Mammary epithelial cell (primary cell): ENCODE measurements at regions of chr5 and their contacts with region 1.

Region 1: GRCh38 chr5:10452768-10453331 is 11.2 kb downstream of the ROPN1L start:
- DNase-seq: peak; percentile 64
- H3K4me3 ChIP-seq: no peak overlapping the region
- H3K27ac ChIP-seq: no peak overlapping the region
- H3K4me1 ChIP-seq: peaks cover 43% of the 10 kb centered on the region
- H3K27me3 ChIP-seq: no peaks in the 10 kb centered on the region
- CTCF ChIP-seq: peak; percentile 79 to 88

Region 2: GRCh38 chr5:9813305-9813704 is 639.5 kb before region 1 on chr5:
- CTCF ChIA-PET with region 1: no interaction called
- dilution Hi-C with region 1: no loop called
- in situ Hi-C with region 1: no loop called
- intact Hi-C with region 1: no loop called
- DNase-seq: no peak
- H3K4me3 ChIP-seq: no peak overlapping the region
- H3K27ac ChIP-seq: no peak overlapping the region
- H3K4me1 ChIP-seq: no peaks in the 10 kb centered on the region
- H3K27me3 ChIP-seq: no peaks in the 10 kb centered on the region
- CTCF ChIP-seq: no peak

Region 3: GRCh38 chr5:10214041-10214440 is 238.8 kb before region 1 on chr5:
- CTCF ChIA-PET with region 1: no interaction called
- dilution Hi-C with region 1: no loop called
- in situ Hi-C with region 1: no loop called
- intact Hi-C with region 1: no loop called
- DNase-seq: no peak
- H3K4me3 ChIP-seq: no peak overlapping the region
- H3K27ac ChIP-seq: no peak overlapping the region
- H3K4me1 ChIP-seq: no peaks in the 10 kb centered on the region
- H3K27me3 ChIP-seq: no peaks in the 10 kb centered on the region
- CTCF ChIP-seq: no peak

Region 4: DNA sequence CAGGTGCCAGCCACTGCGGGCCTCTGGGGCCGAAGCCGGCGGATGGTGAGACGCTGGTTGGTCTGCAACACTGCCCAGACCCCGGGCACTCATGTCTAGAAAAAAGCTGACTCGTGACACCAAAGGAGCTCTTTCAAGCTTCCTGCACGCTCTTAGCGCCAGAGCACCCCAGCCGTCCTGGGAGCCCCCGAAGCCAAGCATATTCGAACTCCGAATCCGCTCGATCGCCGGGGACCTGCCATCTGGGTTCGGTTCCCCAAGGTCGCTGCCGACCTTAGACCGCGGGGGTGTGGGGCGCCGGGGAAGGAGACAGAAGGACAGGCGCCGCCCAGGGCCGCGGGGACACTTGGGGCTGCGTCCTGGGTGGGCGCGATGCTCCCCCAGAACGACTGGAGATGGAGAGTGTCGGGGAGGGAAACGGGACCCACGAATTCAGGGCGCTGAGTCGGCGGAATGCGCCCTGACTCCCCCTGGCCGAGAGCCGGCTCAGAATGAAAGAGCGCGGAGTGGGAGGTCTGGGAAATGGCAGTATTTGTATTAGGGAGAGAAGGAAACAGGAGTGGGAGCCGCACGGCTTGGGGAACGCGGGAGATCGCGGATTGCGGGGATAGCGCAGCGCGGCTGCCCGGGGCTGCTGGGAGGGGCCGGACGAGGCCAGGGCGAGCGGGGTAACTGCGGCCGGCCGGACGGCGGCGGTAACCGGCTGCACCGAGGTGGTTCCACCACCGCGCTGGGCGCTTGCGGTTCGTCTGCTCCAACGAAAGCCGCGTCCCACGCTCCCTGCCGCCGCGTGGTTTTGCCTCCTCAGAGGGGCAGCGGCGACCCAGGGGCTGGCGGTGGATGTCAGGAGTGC is 119.5 kb before region 1 on chr5:
- CTCF ChIA-PET with region 1: no interaction called
- dilution Hi-C with region 1: no loop called
- in situ Hi-C with region 1: no loop called
- intact Hi-C with region 1: no loop called
- DNase-seq: no peak
- H3K4me3 ChIP-seq: peak overlapping the region; percentile 47 to 62 (median 61)
- H3K27ac ChIP-seq: no peak overlapping the region
- H3K4me1 ChIP-seq: peaks cover 25% of the 10 kb centered on the region
- H3K27me3 ChIP-seq: no peaks in the 10 kb centered on the region
- CTCF ChIP-seq: peak in 1 of 2 donors; percentile 20

Region 5: DNA sequence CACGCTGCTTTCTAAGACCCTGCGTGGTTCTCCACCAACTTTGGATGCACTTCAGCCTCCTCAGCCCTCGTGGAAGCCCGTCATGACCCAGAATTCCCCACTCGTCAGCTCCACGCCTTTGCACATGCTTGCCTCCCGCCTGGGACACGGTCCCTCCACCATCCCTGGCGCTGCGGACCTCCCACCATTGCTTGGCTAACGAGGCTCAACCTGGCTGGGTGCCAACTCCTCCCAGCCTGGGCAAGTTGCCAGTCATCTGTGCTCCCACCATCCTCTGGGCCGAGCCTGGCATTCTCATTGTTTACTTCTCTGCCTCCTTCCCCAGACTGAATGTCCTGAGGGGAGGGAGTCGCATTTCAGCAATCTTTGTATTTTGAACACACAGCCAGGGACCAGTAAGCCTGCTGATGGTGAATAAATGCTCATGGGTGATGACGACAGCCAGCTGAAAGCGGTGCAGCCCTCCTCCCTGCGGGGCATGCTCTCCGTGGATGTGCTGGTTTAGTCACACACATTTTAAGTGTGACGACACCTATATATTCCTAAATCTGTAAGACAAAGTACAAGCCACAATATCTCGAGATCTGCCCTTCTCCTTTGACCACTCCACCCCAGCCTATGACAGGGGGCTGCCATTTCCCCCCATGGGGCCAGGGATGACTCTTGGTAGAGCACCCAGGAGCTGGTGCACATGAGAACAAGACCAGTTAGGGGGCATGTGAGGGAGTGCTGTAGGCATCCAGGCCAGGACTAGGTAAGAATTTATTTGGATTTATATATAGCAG is 148.6 kb after region 1 on chr5:
- CTCF ChIA-PET with region 1: interaction called, 3 read pairs
- dilution Hi-C with region 1: no loop called
- in situ Hi-C with region 1: no loop called
- intact Hi-C with region 1: loop called (anchors 1 kb)
- DNase-seq: peak; percentile 86
- H3K4me3 ChIP-seq: peak overlapping the region in 2 of 3 experiments; percentile 12 to 23
- H3K27ac ChIP-seq: peak overlapping the region; percentile 47
- H3K4me1 ChIP-seq: peaks cover 28% of the 10 kb centered on the region
- H3K27me3 ChIP-seq: no peaks in the 10 kb centered on the region
- CTCF ChIP-seq: no peak

Region 6: DNA sequence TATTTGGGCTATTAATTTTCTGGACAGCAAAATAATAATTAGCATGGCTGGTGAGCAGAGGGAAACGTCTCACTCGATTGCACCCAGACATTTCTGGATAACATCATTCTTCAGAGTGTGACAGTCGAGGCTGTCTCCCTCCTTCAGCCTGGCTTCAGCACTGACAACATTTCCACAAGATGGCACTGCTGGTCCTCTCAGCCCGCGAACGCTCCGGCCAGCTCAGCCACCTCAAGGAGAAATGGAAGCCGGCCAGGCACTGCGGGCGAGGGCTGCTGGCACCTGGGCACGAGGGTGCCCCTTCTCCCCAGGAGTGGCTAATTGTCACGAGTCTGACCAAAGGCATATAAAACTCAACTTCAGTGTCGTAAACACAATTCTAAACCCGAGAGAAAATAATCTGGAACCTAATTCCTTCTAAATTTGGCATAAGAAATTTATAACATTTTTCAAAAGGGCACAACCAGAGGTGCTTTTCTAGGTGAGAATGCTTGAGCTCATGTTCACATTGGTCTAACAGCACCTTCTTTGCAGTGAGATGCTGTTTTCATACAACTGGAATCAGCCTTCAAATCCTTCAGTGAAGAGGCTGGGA is 242.3 kb after region 1 on chr5:
- CTCF ChIA-PET with region 1: no interaction called
- dilution Hi-C with region 1: no loop called
- in situ Hi-C with region 1: no loop called
- intact Hi-C with region 1: loop called (anchors 2 kb)
- DNase-seq: peak; percentile 60
- H3K4me3 ChIP-seq: no peak overlapping the region
- H3K27ac ChIP-seq: no peak overlapping the region
- H3K4me1 ChIP-seq: peaks cover 32% of the 10 kb centered on the region
- H3K27me3 ChIP-seq: no peaks in the 10 kb centered on the region
- CTCF ChIP-seq: peak; percentile 80 to 87

Region 7: DNA sequence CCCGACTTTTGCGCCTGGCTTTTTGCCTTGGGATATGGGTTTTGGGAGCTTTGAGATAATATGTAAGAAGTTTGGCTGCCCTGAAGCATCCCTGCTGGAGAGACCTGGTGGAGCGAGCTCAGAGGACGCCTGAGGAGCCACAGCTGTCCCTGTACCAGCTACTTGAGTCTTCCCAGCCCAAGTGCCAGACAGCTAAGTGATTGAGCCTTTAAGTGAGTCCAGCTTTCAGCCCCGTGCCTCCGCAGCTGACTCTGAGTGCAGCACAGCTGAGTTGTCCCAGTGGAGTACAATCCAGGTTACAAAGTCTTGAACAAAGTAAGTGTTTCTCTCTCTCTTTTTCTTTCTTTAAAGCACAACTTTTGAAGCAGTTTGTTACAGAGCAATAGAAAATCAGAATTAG is 512.0 kb after region 1 on chr5:
- CTCF ChIA-PET with region 1: no interaction called
- dilution Hi-C with region 1: no loop called
- in situ Hi-C with region 1: no loop called
- intact Hi-C with region 1: loop called (anchors 10 kb)
- DNase-seq: no peak
- H3K4me3 ChIP-seq: no peak overlapping the region
- H3K27ac ChIP-seq: no peak overlapping the region
- H3K4me1 ChIP-seq: no peaks in the 10 kb centered on the region
- H3K27me3 ChIP-seq: no peaks in the 10 kb centered on the region
- CTCF ChIP-seq: no peak

Region 8: DNA sequence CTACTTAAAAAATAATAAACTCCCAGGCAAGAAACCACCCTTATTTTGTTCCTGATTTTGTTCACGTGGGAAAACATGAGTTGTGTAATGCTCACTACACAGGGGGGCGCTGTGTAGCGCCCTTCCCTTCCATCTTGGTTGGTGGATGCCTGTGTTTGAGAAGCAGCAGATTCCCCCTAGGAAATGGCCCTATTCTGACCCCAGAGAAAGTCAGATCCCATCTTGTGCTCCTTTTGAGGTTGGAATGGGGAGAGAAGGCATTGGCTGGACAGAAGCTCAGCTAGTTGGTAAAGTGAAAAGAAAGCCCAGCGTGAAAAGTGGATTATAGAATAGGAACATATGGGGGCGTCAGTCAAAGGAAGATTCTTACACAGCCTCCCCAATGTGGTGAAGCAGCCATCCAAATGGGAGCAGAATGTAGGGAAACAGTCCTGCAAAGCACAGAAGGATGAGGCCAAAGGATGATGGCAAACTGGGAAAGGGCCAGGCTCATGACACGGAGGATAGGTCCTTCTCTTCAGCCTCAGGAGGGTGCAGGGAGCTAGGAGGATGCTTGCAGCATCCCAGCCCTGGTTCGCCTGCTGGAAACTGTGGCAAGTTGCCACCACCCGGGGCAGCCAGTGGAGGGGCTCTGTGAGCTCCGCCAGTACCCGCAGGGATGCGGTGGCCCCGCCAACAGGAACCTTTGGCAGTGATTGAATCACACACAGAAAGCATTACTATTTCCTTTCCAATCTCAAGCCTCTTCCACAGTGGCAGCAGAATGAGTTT is 622.4 kb after region 1 on chr5:
- CTCF ChIA-PET with region 1: no interaction called
- dilution Hi-C with region 1: no loop called
- in situ Hi-C with region 1: no loop called
- intact Hi-C with region 1: no loop called
- DNase-seq: no peak
- H3K4me3 ChIP-seq: no peak overlapping the region
- H3K27ac ChIP-seq: no peak overlapping the region
- H3K4me1 ChIP-seq: no peaks in the 10 kb centered on the region
- H3K27me3 ChIP-seq: no peaks in the 10 kb centered on the region
- CTCF ChIP-seq: no peak

Region 9: DNA sequence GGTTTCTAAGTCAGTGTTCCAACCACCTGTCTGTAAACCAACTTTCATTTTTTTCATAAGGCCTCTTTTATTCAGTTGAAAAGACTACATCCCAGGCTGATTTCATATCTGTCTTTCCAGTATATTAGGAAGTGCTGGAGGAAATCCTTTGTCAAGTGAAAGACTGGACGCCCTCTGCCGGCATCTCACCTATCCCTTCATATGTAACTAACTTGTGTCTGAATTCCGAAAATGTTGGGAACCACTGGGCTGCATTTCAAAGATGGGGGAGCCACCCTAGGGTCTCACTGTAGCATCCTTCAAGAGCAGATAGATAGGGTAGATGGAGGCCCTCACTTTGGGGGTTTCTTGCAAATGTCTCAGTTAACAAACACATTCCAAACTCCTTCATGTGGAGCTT is 881.6 kb after region 1 on chr5:
- CTCF ChIA-PET with region 1: interaction called, 13 read pairs
- dilution Hi-C with region 1: no loop called
- in situ Hi-C with region 1: no loop called
- intact Hi-C with region 1: no loop called
- DNase-seq: no peak
- H3K4me3 ChIP-seq: no peak overlapping the region
- H3K27ac ChIP-seq: no peak overlapping the region
- H3K4me1 ChIP-seq: no peaks in the 10 kb centered on the region
- H3K27me3 ChIP-seq: no peaks in the 10 kb centered on the region
- CTCF ChIP-seq: no peak